CD8-positive, alpha-beta memory T cell (primary cell): ENCODE measurements at regions of chr1 and their contacts with region 1.

Region 1: DNA sequence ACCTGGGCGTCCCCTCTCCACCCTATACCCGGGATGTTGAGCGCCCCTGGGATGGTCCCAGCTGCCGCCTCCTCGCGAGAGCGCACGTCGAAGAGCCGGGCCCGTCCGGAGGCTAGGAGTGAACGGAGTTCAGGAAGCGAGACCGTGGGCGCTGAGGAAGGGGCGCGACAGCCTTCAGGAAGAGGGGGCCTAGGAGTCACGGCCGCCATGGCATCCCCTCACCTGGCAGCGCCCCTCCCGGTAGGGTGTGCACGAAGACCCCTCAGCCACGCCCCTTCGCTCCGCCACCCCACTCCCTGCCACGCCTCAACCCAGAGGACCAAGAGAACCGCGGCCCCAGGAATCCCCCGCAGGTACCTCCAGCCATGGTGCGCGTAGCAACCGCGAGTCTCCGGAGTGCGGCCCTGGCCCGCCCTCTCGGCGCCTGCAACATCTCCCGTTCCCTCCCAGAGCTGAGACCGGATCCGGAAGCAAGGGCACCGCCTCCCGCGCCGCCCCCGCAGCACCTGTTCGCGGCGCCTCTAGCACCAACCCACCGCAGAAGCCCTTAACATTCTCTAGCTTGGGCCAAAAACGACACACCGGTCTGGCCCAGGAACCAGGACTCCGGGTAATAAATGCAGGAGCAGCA is at the start of gene TSTD1:
- DNase-seq: peak; percentile 81 to 92 (median 90)
- H3K4me3 ChIP-seq: peak within 1 kb of the TSS; percentile 67
- H3K4me3 Mint-ChIP-seq: peak within 1 kb of the TSS; percentile 88 to 94 (median 91)
- H3K27ac ChIP-seq: peak within 1 kb of the TSS; percentile 64
- H3K27ac Mint-ChIP-seq: peak within 1 kb of the TSS; percentile 92 to 98 (median 95)
- H3K4me1 ChIP-seq: peaks cover 32% of the 10 kb centered on the region
- H3K4me1 Mint-ChIP-seq: peaks cover 23 to 59% (median 38%) of the 10 kb centered on the region in 3 donors
- H3K27me3 ChIP-seq: no peaks in the 10 kb centered on the region
- H3K27me3 Mint-ChIP-seq: no peaks in the 10 kb centered on the region
- total RNA-seq, gene TSTD1: 40.2 to 46.1 TPM

Region 2: DNA sequence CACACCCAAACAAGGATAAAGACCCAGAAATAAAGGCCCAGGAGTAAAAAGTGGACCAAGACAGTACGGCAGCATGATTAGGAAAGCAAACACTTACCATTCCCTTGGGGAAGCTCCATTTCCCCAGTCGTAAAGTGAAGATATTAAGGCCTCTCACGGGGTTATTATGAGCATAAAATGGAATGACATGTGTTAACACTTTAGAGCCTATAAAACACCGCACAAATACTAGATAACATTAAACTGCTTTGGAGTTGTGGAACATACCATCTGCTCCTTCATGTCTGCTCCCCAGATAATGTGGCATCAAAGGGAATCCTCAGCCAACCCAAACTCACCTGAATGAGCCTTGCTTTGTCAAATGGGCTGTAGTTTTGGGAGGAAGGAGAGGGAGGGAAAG is 75.1 kb before region 1 on chr1:
- CTCF ChIA-PET with region 1: no interaction called
- POLR2A ChIA-PET with region 1: no interaction called
- DNase-seq: no peak
- H3K4me3 ChIP-seq: no peak overlapping the region
- H3K4me3 Mint-ChIP-seq: no peak overlapping the region
- H3K27ac ChIP-seq: no peak overlapping the region
- H3K27ac Mint-ChIP-seq: no peak overlapping the region
- H3K4me1 ChIP-seq: no peaks in the 10 kb centered on the region
- H3K4me1 Mint-ChIP-seq: no peaks in the 10 kb centered on the region
- H3K27me3 ChIP-seq: no peaks in the 10 kb centered on the region
- H3K27me3 Mint-ChIP-seq: peaks cover 0 to 4% of the 10 kb centered on the region in 2 donors

Region 3: GRCh38 chr1:161021165-161021960 is 17.3 kb before region 1 on chr1:
- CTCF ChIA-PET with region 1: interaction called, 16 read pairs
- POLR2A ChIA-PET with region 1: interaction called, 20 read pairs
- DNase-seq: peak; percentile 85 to 95 (median 91)
- H3K4me3 ChIP-seq: peak overlapping the region; percentile 99
- H3K4me3 Mint-ChIP-seq: peak overlapping the region; percentile 85 to 94 (median 91)
- H3K27ac ChIP-seq: peak overlapping the region; percentile 71
- H3K27ac Mint-ChIP-seq: peak overlapping the region; percentile 66 to 97 (median 95)
- H3K4me1 ChIP-seq: peaks cover 26% of the 10 kb centered on the region
- H3K4me1 Mint-ChIP-seq: peaks cover 19 to 60% (median 40%) of the 10 kb centered on the region in 3 donors
- H3K27me3 ChIP-seq: no peaks in the 10 kb centered on the region
- H3K27me3 Mint-ChIP-seq: no peaks in the 10 kb centered on the region

Region 4: DNA sequence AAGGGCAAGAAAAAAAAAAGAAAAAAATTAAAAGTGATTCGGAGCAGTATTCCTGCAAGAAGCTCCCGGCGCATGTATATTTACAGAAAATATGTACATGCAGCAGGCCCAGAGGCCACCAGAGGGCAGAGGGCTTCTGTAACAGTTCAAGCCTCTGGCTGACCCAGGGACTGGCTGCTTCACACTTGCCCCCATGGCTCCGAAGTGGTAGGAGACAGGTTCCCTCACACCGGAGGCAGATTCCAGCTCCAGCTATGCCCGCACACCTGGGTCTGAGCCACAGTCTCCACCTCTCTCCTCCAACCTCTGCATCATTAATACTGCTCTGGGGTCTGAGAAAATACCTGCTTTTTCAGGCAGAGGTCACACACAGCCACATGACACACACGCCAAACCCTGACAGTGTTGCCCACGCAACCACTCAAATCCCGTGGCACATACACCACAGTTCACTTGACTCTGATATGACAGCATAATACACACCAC is 33.3 kb after region 1 on chr1:
- CTCF ChIA-PET with region 1: interaction called, 69 read pairs
- POLR2A ChIA-PET with region 1: interaction called, 8 read pairs
- DNase-seq: peak in 4 of 5 donors; percentile 24 to 66 (median 41)
- H3K4me3 ChIP-seq: no peak overlapping the region
- H3K4me3 Mint-ChIP-seq: peak overlapping the region in 1 of 7 donors; percentile 59
- H3K27ac ChIP-seq: no peak overlapping the region
- H3K27ac Mint-ChIP-seq: peak overlapping the region in 7 of 8 donors; percentile 17 to 88 (median 70)
- H3K4me1 ChIP-seq: peaks cover 34% of the 10 kb centered on the region
- H3K4me1 Mint-ChIP-seq: peaks cover 33 to 42% (median 41%) of the 10 kb centered on the region in 3 donors
- H3K27me3 ChIP-seq: no peaks in the 10 kb centered on the region
- H3K27me3 Mint-ChIP-seq: peaks cover 0 to 2% of the 10 kb centered on the region in 2 donors